Naive thymus-derived CD4-positive, alpha-beta T cell (primary cell): ENCODE measurements at regions of chr3 and their contacts with region 1.

Region 1: DNA sequence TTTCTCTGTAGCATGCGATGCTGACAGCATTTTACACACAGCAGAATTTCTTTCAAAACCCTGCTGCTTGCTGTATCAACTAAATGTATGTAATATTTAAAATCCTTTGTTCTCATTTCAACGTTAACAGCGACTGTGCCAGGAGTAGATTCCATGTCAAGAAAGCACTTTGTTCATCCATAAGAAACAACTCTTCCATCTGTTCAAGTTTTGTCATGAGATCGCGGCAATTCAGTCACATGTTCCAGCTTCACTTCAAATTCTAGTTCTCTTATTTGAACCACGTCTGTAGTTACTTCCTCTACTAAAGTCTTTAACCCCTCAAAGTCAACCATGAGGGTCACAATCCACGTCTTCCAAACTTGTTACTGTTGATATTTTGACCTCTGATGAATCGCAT is 50.6 kb downstream of the SMARCC1 start:
- DNase-seq: no peak
- ATAC-seq: no peak
- H3K4me3 ChIP-seq: no peak overlapping the region
- H3K4me3 Mint-ChIP-seq: no peak overlapping the region
- H3K27ac ChIP-seq: no peak overlapping the region
- H3K27ac Mint-ChIP-seq: no peak overlapping the region
- H3K4me1 ChIP-seq: no peaks in the 10 kb centered on the region
- H3K4me1 Mint-ChIP-seq: peaks cover 0 to 11% (median 5%) of the 10 kb centered on the region in 7 donors
- H3K27me3 ChIP-seq: no peaks in the 10 kb centered on the region
- H3K27me3 Mint-ChIP-seq: no peaks in the 10 kb centered on the region

Region 2: DNA sequence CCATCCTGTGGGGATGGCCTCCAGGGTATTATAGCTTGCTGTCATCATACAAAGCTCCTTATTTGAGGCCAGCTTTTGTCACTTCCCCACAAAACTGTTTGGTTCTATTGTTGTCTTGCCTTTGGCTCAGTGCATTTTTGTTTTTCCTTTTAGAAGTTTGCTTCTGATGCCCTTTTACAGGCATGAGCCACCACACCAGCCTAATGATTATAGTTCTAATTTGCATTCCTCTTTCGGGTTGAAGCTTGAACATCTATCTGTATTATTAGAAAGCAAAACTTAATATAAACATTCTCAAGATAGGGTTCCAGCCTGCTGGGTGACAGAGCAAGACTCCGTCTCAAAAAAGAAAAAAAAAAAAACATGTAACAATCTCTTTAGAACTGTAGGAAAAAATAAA is 10.9 kb after region 1 on chr3:
- CTCF ChIA-PET with region 1: no interaction called
- POLR2A ChIA-PET with region 1: interaction called, 3 read pairs
- intact Hi-C with region 1: loop called in 1 of 2 experiments (anchors 2 kb)
- DNase-seq: no peak
- ATAC-seq: no peak
- H3K4me3 ChIP-seq: no peak overlapping the region
- H3K4me3 Mint-ChIP-seq: no peak overlapping the region
- H3K27ac ChIP-seq: no peak overlapping the region
- H3K27ac Mint-ChIP-seq: peak overlapping the region in 2 of 9 donors; percentile 14 to 29
- H3K4me1 ChIP-seq: no peaks in the 10 kb centered on the region
- H3K4me1 Mint-ChIP-seq: peaks cover 7 to 36% (median 30%) of the 10 kb centered on the region in 7 donors
- H3K27me3 ChIP-seq: no peaks in the 10 kb centered on the region
- H3K27me3 Mint-ChIP-seq: no peaks in the 10 kb centered on the region